ENCODE measurements at regions of chr17 and their contacts with region 1.

Region 1: GRCh38 chr17:67082107-67082506 is 37.8 kb downstream of the CACNG1 start:
- DNase-seq: no peak
- H3K4me3 Mint-ChIP-seq: no peak overlapping the region
- H3K27ac Mint-ChIP-seq: no peak overlapping the region
- H3K4me1 Mint-ChIP-seq: peaks cover 22% of the 10 kb centered on the region
- H3K27me3 Mint-ChIP-seq: no peaks in the 10 kb centered on the region

Region 2: GRCh38 chr17:67027031-67027628 is 55.0 kb before region 1 on chr17:
- CTCF ChIA-PET with region 1: no interaction called
- intact Hi-C with region 1: loop called (anchors 10 kb)
- DNase-seq: no peak
- H3K4me3 Mint-ChIP-seq: no peak overlapping the region
- H3K27ac Mint-ChIP-seq: no peak overlapping the region
- H3K4me1 Mint-ChIP-seq: no peaks in the 10 kb centered on the region
- H3K27me3 Mint-ChIP-seq: no peaks in the 10 kb centered on the region

Region 3: GRCh38 chr17:67293251-67294203 is 211.4 kb after region 1 on chr17:
- CTCF ChIA-PET with region 1: no interaction called
- intact Hi-C with region 1: loop called (anchors 10 kb)
- DNase-seq: peak; percentile 82
- H3K4me3 Mint-ChIP-seq: no peak overlapping the region
- H3K27ac Mint-ChIP-seq: no peak overlapping the region
- H3K4me1 Mint-ChIP-seq: no peaks in the 10 kb centered on the region
- H3K27me3 Mint-ChIP-seq: no peaks in the 10 kb centered on the region

Region 4: DNA sequence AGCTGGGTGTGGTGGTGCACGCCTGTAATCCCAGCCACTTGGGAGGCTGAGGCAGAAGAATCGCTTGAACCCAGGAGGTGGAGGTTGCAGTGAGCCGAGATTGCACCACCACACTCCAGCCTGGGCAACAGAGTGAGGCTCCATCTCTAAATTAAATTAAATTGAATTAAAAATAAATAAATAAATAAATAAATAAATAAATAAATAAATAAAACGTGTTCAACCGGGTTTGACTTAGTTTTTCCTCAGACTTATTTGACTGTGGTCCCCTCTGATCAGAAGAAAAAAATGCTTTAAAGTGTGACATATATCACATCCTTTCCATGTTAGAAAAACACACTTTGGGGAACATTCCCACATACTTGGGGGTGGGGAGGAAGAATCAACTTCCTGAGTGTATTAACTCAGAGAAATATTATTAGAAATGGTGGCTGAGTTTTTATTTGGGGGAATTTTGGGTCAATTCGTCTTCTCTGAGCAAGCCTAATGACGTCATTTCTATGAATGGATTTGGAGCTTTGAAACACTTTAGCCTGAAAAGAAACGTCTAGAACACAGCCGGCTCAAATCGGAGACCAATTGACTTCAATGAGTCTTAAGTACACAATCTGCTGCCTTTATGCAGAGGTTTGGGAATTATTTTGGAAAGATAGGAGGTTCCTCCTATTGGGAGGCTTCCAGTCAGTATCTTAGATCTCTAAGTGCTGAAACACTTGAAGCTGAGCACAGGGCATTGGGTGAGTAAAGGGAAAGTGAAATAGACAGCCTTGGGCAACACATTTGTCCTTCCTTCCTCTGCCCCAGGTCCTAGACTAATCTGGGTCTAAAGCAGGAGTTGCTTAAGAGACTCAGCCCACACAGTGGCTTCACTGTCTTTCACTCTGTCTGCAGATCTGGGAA is 427.5 kb after region 1 on chr17:
- CTCF ChIA-PET with region 1: no interaction called
- intact Hi-C with region 1: no loop called
- DNase-seq: no peak
- H3K4me3 Mint-ChIP-seq: no peak overlapping the region
- H3K27ac Mint-ChIP-seq: no peak overlapping the region
- H3K4me1 Mint-ChIP-seq: peaks cover 34% of the 10 kb centered on the region
- H3K27me3 Mint-ChIP-seq: no peaks in the 10 kb centered on the region

Measured in activated naive CD4-positive, alpha-beta T cell treated with anti-CD3 and anti-CD28 coated beads for 36 hours (primary cell).